Gastrocnemius medialis (tissue), 4 donors: ENCODE measurements at regions of chr14 and their contacts with region 1.

Region 1: GRCh38 chr14:20278414-20278813 is 27.3 kb downstream of the TTC5 start:
- DNase-seq: no peak
- ATAC-seq: no peak
- H3K4me3 ChIP-seq: no peak overlapping the region
- H3K27ac ChIP-seq: no peak overlapping the region
- H3K4me1 ChIP-seq: no peaks in the 10 kb centered on the region
- H3K27me3 ChIP-seq: no peaks in the 10 kb centered on the region
- CTCF ChIP-seq: no peak
- POLR2A ChIP-seq: no peak

Region 2: GRCh38 chr14:21346549-21347135 is 1068.2 kb after region 1 on chr14:
- in situ Hi-C with region 1: no loop called
- intact Hi-C with region 1: loop called (anchors 10 kb)
- DNase-seq: no peak
- ATAC-seq: no peak
- H3K4me3 ChIP-seq: no peak overlapping the region
- H3K27ac ChIP-seq: no peak overlapping the region
- H3K4me1 ChIP-seq: no peaks in the 10 kb centered on the region
- H3K27me3 ChIP-seq: no peaks in the 10 kb centered on the region
- CTCF ChIP-seq: no peak
- POLR2A ChIP-seq: no peak